Body of pancreas (tissue), 4 donors: ENCODE measurements at regions of chr12 and their contacts with region 1.

Region 1: DNA sequence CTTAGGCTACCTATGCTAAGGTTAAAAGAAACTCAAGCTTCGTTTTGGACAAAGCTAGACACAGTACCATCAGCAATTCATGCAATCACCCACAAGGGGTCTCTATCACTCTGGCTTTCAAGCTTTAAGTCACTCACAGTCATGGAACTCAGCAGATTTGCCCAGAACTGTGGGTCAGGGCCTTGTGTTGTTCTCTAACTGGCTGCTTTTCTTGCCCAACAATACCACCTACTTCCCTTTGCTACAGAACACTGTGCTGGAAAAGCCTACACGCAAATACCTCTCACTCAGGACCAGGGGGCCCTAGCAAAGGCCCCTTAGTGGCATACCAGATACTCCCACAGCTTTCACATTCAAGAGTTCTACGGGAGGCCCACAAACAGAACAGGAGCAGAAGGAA is 9.1 kb downstream of the NEMP1 start:
- DNase-seq: peak; percentile 69 to 88 (median 76)
- ATAC-seq: peak; percentile 99
- H3K4me3 ChIP-seq: no peak overlapping the region
- H3K27ac ChIP-seq: peak overlapping the region in 3 of 4 donors; percentile 1 to 60 (median 24)
- H3K4me1 ChIP-seq: peaks cover 7% of the 10 kb centered on the region
- H3K27me3 ChIP-seq: no peaks in the 10 kb centered on the region
- CTCF ChIP-seq: peak; percentile 70 to 96 (median 92)
- POLR2A ChIP-seq: no peak

Region 2: GRCh38 chr12:56766535-56766934 is 303.0 kb before region 1 on chr12:
- intact Hi-C with region 1: no loop called
- DNase-seq: peak in 1 of 4 donors; percentile 31
- ATAC-seq: no peak
- H3K4me3 ChIP-seq: no peak overlapping the region
- H3K27ac ChIP-seq: no peak overlapping the region
- H3K4me1 ChIP-seq: peaks cover 11% of the 10 kb centered on the region
- H3K27me3 ChIP-seq: no peaks in the 10 kb centered on the region
- CTCF ChIP-seq: no peak
- POLR2A ChIP-seq: no peak

Region 3: GRCh38 chr12:57106021-57106708 is 36.6 kb after region 1 on chr12:
- intact Hi-C with region 1: loop called (anchors 5 kb)
- DNase-seq: no peak
- ATAC-seq: no peak
- H3K4me3 ChIP-seq: no peak overlapping the region
- H3K27ac ChIP-seq: no peak overlapping the region
- H3K4me1 ChIP-seq: peaks cover 17% of the 10 kb centered on the region
- H3K27me3 ChIP-seq: no peaks in the 10 kb centered on the region
- CTCF ChIP-seq: no peak
- POLR2A ChIP-seq: no peak

Region 4: GRCh38 chr12:57118711-57119271 is 49.3 kb after region 1 on chr12:
- intact Hi-C with region 1: loop called (anchors 5 kb)
- DNase-seq: peak in 1 of 4 donors; percentile 44
- ATAC-seq: peak; percentile 21
- H3K4me3 ChIP-seq: no peak overlapping the region
- H3K27ac ChIP-seq: no peak overlapping the region
- H3K4me1 ChIP-seq: no peaks in the 10 kb centered on the region
- H3K27me3 ChIP-seq: no peaks in the 10 kb centered on the region
- CTCF ChIP-seq: no peak
- POLR2A ChIP-seq: no peak

Region 5: DNA sequence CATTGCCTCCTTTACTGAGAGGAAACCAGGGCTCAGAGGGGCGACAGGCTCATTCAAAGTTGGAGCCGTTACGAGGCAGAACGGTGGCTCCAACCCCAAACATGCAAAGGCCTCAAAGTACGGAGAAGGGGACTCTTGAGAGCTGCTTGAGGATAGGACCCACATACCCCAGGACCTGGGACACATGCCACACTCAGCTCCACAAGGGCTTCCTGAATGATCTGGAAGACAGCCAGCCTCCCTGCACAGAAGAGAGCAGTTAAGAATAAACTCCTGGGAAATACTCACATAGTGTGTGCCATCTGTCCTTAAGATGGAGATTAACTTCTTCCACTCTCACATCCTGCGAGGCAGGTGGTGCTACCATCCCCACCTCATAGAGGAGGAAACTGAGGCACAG is 120.5 kb after region 1 on chr12:
- intact Hi-C with region 1: loop called (anchors 5 kb)
- DNase-seq: no peak
- ATAC-seq: no peak
- H3K4me3 ChIP-seq: no peak overlapping the region
- H3K27ac ChIP-seq: no peak overlapping the region
- H3K4me1 ChIP-seq: no peaks in the 10 kb centered on the region
- H3K27me3 ChIP-seq: no peaks in the 10 kb centered on the region
- CTCF ChIP-seq: no peak
- POLR2A ChIP-seq: no peak